ENCODE measurements at regions of chr5 and their contacts with region 1.

Region 1: GRCh38 chr5:148383564-148384379 is at the start of gene FBXO38:
- DNase-seq: peak; percentile 94 to 99 (median 97)
- ATAC-seq: peak; percentile 95
- H3K4me3 ChIP-seq: peak within 1 kb of the TSS; percentile 77 to 83
- H3K4me3 Mint-ChIP-seq: peak within 1 kb of the TSS; percentile 87
- H3K27ac ChIP-seq: peak within 1 kb of the TSS; percentile 97
- H3K27ac Mint-ChIP-seq: peak within 1 kb of the TSS; percentile 96
- H3K4me1 ChIP-seq: peaks cover 38% of the 10 kb centered on the region
- H3K4me1 Mint-ChIP-seq: peaks cover 68% of the 10 kb centered on the region
- H3K27me3 ChIP-seq: no peaks in the 10 kb centered on the region
- H3K27me3 Mint-ChIP-seq: no peaks in the 10 kb centered on the region
- CTCF ChIP-seq: no peak
- total RNA-seq, gene FBXO38: 45.5 to 48.7 TPM

Region 2: GRCh38 chr5:146446853-146447733 is 1936.7 kb before region 1 on chr5 and contains the start of gene TCERG1:
- CTCF ChIA-PET with region 1: no interaction called
- POLR2A ChIA-PET with region 1: no interaction called
- intact Hi-C with region 1: loop called (anchors 2 kb)
- DNase-seq: peak; percentile 91 to 100 (median 96)
- ATAC-seq: peak; percentile 87
- H3K4me3 ChIP-seq: peak within 1 kb of the TSS; percentile 79 to 99
- H3K4me3 Mint-ChIP-seq: peak within 1 kb of the TSS; percentile 99
- H3K27ac ChIP-seq: peak within 1 kb of the TSS; percentile 85 to 97
- H3K27ac Mint-ChIP-seq: peak within 1 kb of the TSS; percentile 99
- H3K4me1 ChIP-seq: peaks cover 27% of the 10 kb centered on the region
- H3K4me1 Mint-ChIP-seq: peaks cover 43% of the 10 kb centered on the region
- H3K27me3 ChIP-seq: no peaks in the 10 kb centered on the region
- H3K27me3 Mint-ChIP-seq: no peaks in the 10 kb centered on the region
- CTCF ChIP-seq: peak; percentile 65
- total RNA-seq, gene TCERG1: 110 to 114 TPM

Region 3: DNA sequence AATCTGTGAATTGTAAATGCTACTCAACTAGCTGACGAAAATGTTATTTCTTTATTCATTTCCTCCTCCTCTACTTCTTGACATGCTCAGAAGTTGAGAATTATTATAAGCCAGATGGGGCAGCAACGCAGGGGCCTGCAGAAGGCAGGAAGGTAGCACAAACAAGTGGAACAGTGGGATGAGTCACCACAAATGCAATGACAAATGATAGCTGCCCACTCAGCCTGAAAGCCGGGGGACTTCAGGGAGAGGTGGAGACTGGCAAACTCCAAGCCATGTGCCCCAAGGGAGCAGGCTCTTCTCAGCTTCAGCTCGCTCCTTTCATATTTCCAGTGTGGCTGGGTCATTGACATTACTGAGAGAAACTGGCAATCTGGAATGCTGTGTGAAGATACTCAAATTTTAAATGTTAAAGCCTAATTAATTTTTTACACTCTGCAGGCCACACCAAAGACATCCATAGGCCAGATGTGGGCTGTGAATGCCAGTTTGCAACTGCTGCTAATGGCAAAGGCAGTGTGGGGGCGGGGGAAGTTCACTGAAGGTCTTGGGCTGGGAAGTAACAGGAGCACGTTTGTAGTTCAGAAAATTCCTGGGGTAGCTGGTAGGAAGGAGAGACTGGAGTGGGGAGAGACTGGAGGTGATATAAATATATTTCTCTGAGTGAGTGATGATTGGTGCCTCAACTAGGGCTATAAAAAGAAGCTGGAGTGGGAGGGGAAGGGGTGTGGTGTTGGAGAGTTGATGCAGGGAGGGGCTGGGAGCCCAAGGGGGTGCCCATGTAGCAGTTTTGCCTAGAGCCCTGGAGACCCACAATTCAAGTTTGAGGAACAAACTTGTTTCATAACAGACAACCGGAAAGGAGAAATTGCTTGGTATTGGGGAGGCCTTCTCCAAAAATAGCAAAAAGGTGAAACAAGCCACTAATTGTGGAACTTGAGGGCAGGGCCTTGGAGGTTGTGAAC is 421.8 kb after region 1 on chr5:
- CTCF ChIA-PET with region 1: no interaction called
- POLR2A ChIA-PET with region 1: no interaction called
- intact Hi-C with region 1: loop called in 1 of 2 experiments (anchors 2 kb)
- DNase-seq: no peak
- ATAC-seq: no peak
- H3K4me3 ChIP-seq: no peak overlapping the region
- H3K4me3 Mint-ChIP-seq: no peak overlapping the region
- H3K27ac ChIP-seq: no peak overlapping the region
- H3K27ac Mint-ChIP-seq: no peak overlapping the region
- H3K4me1 ChIP-seq: peaks cover 16% of the 10 kb centered on the region
- H3K4me1 Mint-ChIP-seq: peaks cover 25% of the 10 kb centered on the region
- H3K27me3 ChIP-seq: no peaks in the 10 kb centered on the region
- H3K27me3 Mint-ChIP-seq: peaks cover 2% of the 10 kb centered on the region
- CTCF ChIP-seq: no peak

Region 4: DNA sequence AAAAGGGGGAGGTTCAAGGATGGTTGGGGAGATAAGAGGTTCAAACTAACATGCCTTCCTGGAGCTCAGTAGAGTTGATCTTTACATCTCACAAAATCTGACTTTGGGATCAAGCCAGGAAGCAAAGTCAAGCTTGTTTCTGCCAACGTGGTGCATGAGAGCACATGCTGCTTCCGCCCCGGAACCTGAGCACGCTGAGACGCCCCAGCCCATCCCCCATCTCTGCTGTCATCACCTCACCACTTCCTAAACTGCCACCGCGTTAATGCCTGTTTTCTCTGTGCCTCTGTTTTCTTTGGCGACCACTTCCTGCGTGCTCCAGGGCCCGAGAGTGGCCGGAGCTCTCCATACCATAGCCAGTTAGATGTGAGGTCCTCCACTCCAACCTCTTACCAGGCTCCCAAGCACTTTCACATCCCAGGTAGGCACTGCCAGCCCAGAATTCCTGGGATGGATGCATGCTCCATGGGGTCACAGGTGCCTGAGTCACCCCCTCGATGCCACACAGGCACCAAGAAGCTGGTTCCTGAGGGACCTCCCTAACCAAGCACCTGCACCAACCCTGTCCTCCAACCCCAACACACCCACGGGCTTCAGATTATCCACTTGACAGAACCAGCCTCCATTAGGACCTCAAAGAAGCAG is 856.7 kb after region 1 on chr5:
- CTCF ChIA-PET with region 1: no interaction called
- POLR2A ChIA-PET with region 1: no interaction called
- intact Hi-C with region 1: loop called in 1 of 2 experiments (anchors 10 kb)
- DNase-seq: peak; percentile 70 to 93 (median 80)
- ATAC-seq: peak; percentile 97
- H3K4me3 ChIP-seq: peak overlapping the region in 1 of 2 experiments; percentile 20
- H3K4me3 Mint-ChIP-seq: no peak overlapping the region
- H3K27ac ChIP-seq: peak overlapping the region; percentile 49 to 60
- H3K27ac Mint-ChIP-seq: peak overlapping the region; percentile 81
- H3K4me1 ChIP-seq: peaks cover 42% of the 10 kb centered on the region
- H3K4me1 Mint-ChIP-seq: peaks cover 13% of the 10 kb centered on the region
- H3K27me3 ChIP-seq: no peaks in the 10 kb centered on the region
- H3K27me3 Mint-ChIP-seq: peaks cover 12% of the 10 kb centered on the region
- CTCF ChIP-seq: no peak

Region 5: DNA sequence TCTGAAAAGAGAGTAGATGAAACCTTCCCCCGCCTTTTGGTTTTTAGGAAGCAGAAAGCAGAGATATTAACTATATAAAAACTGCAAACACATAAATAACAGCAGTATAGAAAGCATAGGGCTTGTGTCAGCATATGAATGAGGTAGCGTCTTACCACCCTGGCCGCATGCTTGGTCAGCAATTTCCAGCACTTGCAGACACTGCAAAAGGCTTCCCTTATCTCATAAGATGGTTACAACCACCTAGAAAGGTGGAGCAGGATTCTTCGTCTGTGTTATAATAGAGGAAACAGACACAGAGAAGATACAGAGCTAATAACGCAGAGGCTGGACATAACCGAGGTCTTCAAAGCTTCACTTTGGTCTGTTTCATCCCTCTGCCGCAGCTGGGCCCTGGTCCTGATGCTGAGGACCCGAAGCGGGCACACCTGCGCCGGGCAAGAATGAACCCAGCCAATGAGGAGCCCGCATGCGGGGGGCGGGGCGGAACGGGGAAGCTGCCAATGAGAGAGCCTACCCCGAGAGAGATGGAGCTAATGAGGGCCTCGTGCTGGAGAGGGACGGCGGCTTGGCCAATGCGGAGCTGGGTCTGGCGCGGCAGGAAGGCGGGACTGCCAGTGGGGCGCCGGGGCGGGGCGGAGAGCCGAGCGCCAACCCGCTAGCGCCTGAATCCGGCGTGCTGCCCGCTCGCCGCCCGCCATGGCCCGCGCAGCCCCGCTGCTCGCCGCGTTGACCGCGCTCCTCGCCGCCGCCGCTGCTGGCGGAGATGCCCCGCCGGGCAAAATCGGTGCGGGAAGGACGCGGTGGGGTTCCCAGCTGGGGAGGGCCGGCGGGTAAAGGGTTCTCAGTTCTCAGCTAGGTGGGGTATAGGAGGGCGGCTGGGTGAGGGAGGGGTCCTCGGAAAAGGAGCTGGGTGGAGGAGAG is 973.9 kb after region 1 on chr5 and contains the start of gene PCYOX1L:
- CTCF ChIA-PET with region 1: no interaction called
- POLR2A ChIA-PET with region 1: no interaction called
- intact Hi-C with region 1: loop called in 1 of 2 experiments (anchors 5 kb)
- DNase-seq: peak; percentile 89 to 99 (median 95)
- ATAC-seq: peak; percentile 96
- H3K4me3 ChIP-seq: peak within 1 kb of the TSS; percentile 83 to 88
- H3K4me3 Mint-ChIP-seq: peak within 1 kb of the TSS; percentile 93
- H3K27ac ChIP-seq: peak within 1 kb of the TSS; percentile 63 to 74
- H3K27ac Mint-ChIP-seq: peak within 1 kb of the TSS; percentile 92
- H3K4me1 ChIP-seq: peaks cover 37% of the 10 kb centered on the region
- H3K4me1 Mint-ChIP-seq: peaks cover 67% of the 10 kb centered on the region
- H3K27me3 ChIP-seq: no peaks in the 10 kb centered on the region
- H3K27me3 Mint-ChIP-seq: no peaks in the 10 kb centered on the region
- CTCF ChIP-seq: no peak
- total RNA-seq, gene PCYOX1L: 18.9 to 21.9 TPM

Region 6: GRCh38 chr5:149731639-149732323 is 1348.0 kb after region 1 on chr5:
- CTCF ChIA-PET with region 1: no interaction called
- POLR2A ChIA-PET with region 1: no interaction called
- intact Hi-C with region 1: loop called in 1 of 2 experiments (anchors 5 kb)
- DNase-seq: peak; percentile 39 to 85 (median 72)
- ATAC-seq: peak; percentile 53
- H3K4me3 ChIP-seq: peak overlapping the region; percentile 91 to 98
- H3K4me3 Mint-ChIP-seq: peak overlapping the region; percentile 88
- H3K27ac ChIP-seq: peak overlapping the region in 1 of 2 experiments; percentile 70
- H3K27ac Mint-ChIP-seq: peak overlapping the region; percentile 82
- H3K4me1 ChIP-seq: peaks cover 8% of the 10 kb centered on the region
- H3K4me1 Mint-ChIP-seq: peaks cover 8% of the 10 kb centered on the region
- H3K27me3 ChIP-seq: no peaks in the 10 kb centered on the region
- H3K27me3 Mint-ChIP-seq: no peaks in the 10 kb centered on the region
- CTCF ChIP-seq: no peak

Region 7: GRCh38 chr5:150000256-150000989 is 1616.7 kb after region 1 on chr5 and contains the starts of genes HMGXB3 and TIGD6:
- CTCF ChIA-PET with region 1: no interaction called
- POLR2A ChIA-PET with region 1: no interaction called
- intact Hi-C with region 1: loop called in 1 of 2 experiments (anchors 5 kb)
- DNase-seq: peak; percentile 67 to 92 (median 83)
- ATAC-seq: peak; percentile 84
- H3K4me3 ChIP-seq: peak within 1 kb of the TSS; percentile 73 to 79
- H3K4me3 Mint-ChIP-seq: peak within 1 kb of the TSS; percentile 89
- H3K27ac ChIP-seq: peak within 1 kb of the TSS; percentile 75 to 80
- H3K27ac Mint-ChIP-seq: peak within 1 kb of the TSS; percentile 91
- H3K4me1 ChIP-seq: peaks cover 22% of the 10 kb centered on the region
- H3K4me1 Mint-ChIP-seq: peaks cover 39% of the 10 kb centered on the region
- H3K27me3 ChIP-seq: no peaks in the 10 kb centered on the region
- H3K27me3 Mint-ChIP-seq: no peaks in the 10 kb centered on the region
- CTCF ChIP-seq: no peak
- total RNA-seq, gene HMGXB3: 27.4 to 29.7 TPM
- total RNA-seq, gene TIGD6: 0.97 to 1.5 TPM